ENCODE measurements at regions of chr11 and their contacts with region 1.

Region 1: GRCh38 chr11:12441231-12441861 is 64.0 kb downstream of the PARVA start:
- DNase-seq: no peak
- H3K4me3 Mint-ChIP-seq: no peak overlapping the region
- H3K27ac Mint-ChIP-seq: no peak overlapping the region
- H3K4me1 Mint-ChIP-seq: no peaks in the 10 kb centered on the region
- H3K27me3 Mint-ChIP-seq: peaks cover 5% of the 10 kb centered on the region

Region 2: DNA sequence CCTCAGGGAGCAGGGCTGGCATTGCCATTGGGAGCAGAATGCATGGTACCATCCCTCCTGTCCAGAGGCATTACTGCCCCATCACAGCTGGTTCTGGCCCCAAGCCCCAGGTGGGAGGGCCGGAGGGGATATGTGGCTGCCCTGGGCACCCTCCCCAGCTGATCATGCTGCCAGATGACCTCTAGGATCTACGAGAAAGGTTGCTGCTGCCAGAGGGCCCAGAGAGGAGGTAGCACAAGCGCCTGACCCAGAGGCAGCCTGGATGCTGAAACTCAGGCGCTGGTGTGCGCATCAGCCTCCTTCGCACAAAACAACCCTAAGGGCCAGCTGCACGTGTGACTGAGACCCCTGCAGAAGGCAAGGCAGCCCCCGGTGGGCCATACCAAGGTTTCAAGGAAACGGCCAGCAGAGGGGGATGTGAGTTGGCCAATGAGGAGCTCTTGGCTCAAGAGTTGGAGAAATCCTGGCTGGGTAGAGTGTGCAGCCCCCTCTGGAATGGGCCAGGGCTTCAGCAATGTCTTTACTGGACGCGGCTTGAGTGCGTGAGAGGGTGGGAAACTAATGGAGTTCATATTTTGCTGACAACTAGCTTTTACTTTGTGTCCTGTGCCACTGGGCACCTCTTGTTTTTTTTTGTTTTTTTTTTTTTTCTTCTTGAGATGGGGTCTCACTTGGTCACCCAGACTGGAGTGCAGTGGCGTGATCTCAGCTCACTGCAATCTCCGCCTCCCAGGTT is 152.2 kb before region 1 on chr11:
- CTCF ChIA-PET with region 1: interaction called, 10 read pairs
- POLR2A ChIA-PET with region 1: no interaction called
- DNase-seq: no peak
- H3K4me3 Mint-ChIP-seq: no peak overlapping the region
- H3K27ac Mint-ChIP-seq: no peak overlapping the region
- H3K4me1 Mint-ChIP-seq: peaks cover 19% of the 10 kb centered on the region
- H3K27me3 Mint-ChIP-seq: no peaks in the 10 kb centered on the region

Region 3: GRCh38 chr11:12724301-12725046 is 283.1 kb after region 1 on chr11:
- CTCF ChIA-PET with region 1: no interaction called
- POLR2A ChIA-PET with region 1: no interaction called
- DNase-seq: no peak
- H3K4me3 Mint-ChIP-seq: no peak overlapping the region
- H3K27ac Mint-ChIP-seq: no peak overlapping the region
- H3K4me1 Mint-ChIP-seq: peaks cover 4% of the 10 kb centered on the region
- H3K27me3 Mint-ChIP-seq: peaks cover 75% of the 10 kb centered on the region